ENCODE measurements at regions of chr1 and their contacts with region 1.

Region 1: GRCh38 chr1:7975212-7975865 is 13.8 kb downstream of the PARK7 start:
- DNase-seq: no peak
- H3K4me3 ChIP-seq: no peak overlapping the region
- CTCF ChIP-seq: peak; percentile 90

Region 2: DNA sequence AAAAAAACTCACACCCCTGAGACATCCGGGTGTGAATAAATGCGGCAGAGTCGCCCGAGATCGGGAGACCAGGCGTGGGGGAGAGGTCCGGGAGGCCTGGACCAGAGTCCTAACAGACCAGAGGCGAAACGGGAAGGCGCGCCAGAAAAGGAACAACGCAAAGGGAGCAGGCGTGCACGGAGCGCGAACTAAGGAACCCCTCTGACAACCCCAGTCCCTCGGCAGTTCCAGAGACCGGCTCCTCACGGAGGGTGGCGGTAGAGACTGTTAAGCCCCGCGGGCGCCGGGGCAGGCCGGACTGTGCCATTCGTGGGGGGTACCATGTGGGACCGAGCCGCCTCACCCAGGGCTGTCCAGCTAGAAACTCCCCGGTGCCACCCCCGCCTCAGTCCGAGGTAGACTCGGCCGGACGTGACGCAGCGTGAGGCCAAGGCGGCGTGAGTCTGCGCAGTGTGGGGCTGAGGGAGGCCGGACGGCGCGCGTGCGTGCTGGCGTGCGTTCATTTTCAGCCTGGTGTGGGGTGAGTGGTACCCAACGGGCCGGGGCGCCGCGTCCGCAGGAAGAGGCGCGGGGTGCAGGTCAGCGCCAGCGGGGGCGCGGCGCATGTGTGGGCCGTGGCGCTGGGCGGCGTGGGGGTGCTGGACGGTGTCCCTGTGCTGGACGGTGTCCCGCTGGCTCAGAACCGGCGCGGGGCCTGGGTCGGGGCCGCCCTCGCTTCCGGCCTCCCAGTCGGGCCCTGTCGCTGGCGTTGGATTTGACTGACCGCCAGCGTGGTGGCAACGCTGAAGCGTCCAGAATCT is 13.9 kb before region 1 on chr1 and contains the start of gene PARK7:
- CTCF ChIA-PET with region 1: interaction called, 56 read pairs
- POLR2A ChIA-PET with region 1: interaction called, 7 read pairs
- DNase-seq: peak; percentile 95
- H3K4me3 ChIP-seq: peak within 1 kb of the TSS; percentile 93
- CTCF ChIP-seq: peak; percentile 65

Region 3: DNA sequence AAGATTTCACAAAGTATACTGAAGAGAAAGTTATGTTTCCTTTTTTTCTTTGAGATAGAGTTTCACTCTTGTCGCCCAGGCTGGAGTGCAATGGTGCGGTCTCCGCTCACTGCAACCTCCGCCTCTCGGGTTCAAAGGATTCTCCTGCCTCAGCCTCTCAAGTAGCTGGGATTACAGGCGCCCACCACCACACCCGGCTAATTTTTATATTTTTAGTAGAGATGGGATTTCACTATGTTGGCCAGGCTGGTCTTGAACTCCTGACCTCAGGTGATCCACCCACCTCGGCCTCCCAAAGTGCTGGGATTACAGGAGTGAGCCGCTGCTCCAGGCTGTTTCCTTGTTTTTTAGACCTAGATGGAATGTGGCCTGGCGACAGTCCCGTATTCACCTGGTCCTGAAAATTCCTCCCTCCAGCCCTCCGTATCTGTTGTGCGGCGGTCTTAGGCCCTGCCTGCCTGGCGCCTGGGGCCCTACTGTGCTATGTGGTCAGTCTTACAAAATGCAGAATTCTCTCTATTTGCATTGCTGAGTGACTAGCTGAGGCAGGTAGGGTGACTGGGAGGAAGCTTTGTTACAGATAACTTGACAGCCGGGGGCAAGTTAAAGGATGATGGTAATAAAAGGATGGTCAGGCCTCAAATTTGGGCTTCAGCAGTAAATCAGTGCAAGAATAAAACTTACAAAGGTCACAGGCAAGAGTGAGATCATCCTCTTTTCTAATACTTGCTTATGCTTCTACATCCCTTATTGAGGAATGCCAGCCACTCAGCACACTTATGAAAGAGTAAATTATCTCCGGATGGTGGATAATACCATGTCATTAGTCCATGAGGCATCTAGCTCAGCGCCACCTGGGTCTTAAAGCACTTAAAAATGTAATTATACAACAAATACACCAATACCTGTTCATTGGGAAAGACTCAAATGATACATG is 16.4 kb after region 1 on chr1:
- CTCF ChIA-PET with region 1: interaction called, 94 read pairs
- POLR2A ChIA-PET with region 1: no interaction called
- DNase-seq: no peak
- H3K4me3 ChIP-seq: no peak overlapping the region
- CTCF ChIP-seq: no peak

Region 4: GRCh38 chr1:8343464-8344001 is 368.2 kb after region 1 on chr1:
- CTCF ChIA-PET with region 1: interaction called, 248 read pairs
- POLR2A ChIA-PET with region 1: no interaction called
- DNase-seq: peak; percentile 82
- H3K4me3 ChIP-seq: peak overlapping the region; percentile 3; the same call in 1 of the 2 replicates
- CTCF ChIP-seq: no peak

Region 5: GRCh38 chr1:8348777-8349491 is 373.6 kb after region 1 on chr1:
- CTCF ChIA-PET with region 1: interaction called, 248 read pairs
- POLR2A ChIA-PET with region 1: interaction called, 3 read pairs
- DNase-seq: no peak
- H3K4me3 ChIP-seq: no peak overlapping the region
- CTCF ChIP-seq: peak; percentile 79

Measured in AG04449 (cell line).